H1 (cell line): ENCODE measurements at regions of chr10 and their contacts with region 1.

Region 1: DNA sequence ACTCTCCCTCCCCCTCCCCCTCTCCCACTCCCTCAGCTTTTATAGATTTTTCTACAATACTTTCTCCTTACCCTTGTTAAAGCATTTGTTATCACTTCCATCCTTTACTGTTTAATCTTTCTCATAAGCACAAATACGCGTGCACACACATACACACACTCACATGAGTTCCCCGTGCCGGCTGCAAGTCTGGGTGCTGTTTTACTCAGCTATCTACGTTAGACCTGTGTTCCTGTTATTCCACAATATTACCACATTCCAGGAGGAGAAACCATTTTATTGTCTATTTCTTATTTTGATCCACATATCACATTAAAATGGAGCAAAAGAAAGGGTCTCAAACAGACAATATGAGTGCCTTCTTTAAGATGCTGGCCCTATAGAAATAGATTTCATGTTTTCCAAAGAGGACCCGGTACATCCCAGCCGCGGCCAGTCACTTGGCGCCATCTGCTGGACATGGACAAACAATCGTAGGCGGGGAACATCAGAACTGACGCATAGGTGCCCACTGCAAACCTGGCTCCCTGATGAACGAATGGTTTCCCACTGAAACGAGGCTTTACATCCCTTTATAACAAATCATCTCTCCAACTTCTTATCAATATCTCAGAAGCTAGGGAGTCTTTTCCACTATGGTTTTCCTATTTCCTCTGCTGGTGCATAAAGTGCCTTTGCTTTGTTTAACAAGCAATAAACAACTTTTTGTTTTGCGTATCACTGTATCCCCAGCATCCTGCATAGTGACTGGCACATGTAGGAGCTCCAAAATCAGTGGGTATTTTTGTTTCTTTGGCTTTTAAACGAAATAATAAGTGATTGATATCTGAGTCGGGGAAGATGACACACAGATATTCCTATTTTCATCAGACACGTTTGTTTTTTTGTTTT is 25.2 kb upstream of the OPTN start:
- DNase-seq: peak; percentile 25 to 83
- H3K4me3 ChIP-seq: no peak overlapping the region
- H3K27ac ChIP-seq: no peak overlapping the region
- H3K4me1 ChIP-seq: peaks cover 0 to under 1% (median under 1%) of the 10 kb centered on the region in 4 experiments; a peak in 2 of 7 replicates
- H3K27me3 ChIP-seq: no peaks in the 10 kb centered on the region
- CTCF ChIP-seq: peak; percentile 88 to 89 (median 89)
- EP300 ChIP-seq: no peak
- POLR2A ChIP-seq: no peak
- RAD21 ChIP-seq: peak; percentile 97

Region 2: DNA sequence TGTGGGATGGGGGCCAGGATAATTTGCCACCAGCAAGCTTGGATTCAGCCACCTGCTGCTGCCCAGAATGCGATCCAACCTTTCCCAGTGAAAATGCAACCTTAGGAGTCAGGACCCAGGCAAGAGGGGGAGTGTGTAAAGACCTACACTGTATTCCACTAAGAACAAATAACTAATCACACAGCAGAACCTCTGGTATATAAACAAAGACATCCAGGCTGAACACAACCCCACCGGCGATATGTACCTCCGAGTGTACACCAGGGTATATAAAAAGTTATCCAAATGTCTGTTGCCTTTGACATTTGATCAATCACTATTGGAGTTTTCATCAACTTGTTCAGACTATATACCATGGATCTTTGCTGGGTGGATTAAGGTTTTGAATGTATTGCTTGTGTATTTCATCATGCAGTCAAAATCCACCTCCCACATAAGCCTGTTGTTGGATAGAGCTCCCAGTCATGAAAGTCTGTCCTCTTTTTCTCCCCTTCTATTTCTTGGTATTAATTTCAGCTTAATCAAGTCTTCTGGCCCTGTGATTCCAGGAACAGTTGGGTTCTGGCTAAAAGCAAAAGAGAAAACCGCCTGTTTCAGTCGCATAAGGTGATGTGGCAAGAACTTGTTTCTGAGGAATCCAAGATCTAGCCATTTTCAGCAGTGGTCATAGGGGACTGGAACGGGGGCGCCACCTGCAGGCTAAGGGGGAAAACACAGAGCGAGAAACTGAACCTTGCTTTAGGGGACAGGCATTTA is 364.0 kb before region 1 on chr10:
- CTCF ChIA-PET with region 1: interaction called, 11 read pairs
- POLR2A ChIA-PET with region 1: no interaction called
- DNase-seq: peak; percentile 43 to 90
- H3K4me3 ChIP-seq: no peak overlapping the region
- H3K27ac ChIP-seq: no peak overlapping the region
- H3K4me1 ChIP-seq: peaks cover 2 to 18% (median 6%) of the 10 kb centered on the region in 4 experiments; a peak in 4 of 7 replicates
- H3K27me3 ChIP-seq: no peaks in the 10 kb centered on the region
- CTCF ChIP-seq: peak; percentile 84 to 94 (median 87)
- EP300 ChIP-seq: no peak
- POLR2A ChIP-seq: no peak
- RAD21 ChIP-seq: peak; percentile 94 to 95

Region 3: DNA sequence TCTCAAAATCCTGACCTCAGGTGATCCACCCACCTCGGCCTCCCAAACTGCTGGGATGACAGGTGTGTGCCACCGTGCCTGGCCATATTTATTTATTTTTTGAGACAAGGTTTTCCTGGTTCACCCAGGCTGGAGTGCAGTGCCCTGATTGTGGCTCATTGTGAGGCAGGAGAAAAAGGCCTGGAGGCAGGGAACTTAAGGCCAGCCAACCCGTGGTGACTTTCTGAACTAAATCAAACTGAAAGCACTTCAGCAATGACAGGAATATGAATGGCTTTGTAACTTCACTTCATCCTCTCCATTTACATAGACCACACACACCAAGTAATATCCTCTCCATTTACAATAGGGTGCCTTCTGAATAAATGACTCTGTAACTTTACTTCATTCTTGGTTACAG is 197.7 kb before region 1 on chr10:
- CTCF ChIA-PET with region 1: no interaction called
- POLR2A ChIA-PET with region 1: no interaction called
- DNase-seq: no peak
- H3K4me3 ChIP-seq: no peak overlapping the region
- H3K27ac ChIP-seq: no peak overlapping the region
- H3K4me1 ChIP-seq: no peaks in the 10 kb centered on the region; a peak in 1 of 7 replicates
- H3K27me3 ChIP-seq: no peaks in the 10 kb centered on the region
- CTCF ChIP-seq: no peak
- EP300 ChIP-seq: no peak
- POLR2A ChIP-seq: no peak
- RAD21 ChIP-seq: no peak

Region 4: GRCh38 chr10:13016426-13016825 is 58.4 kb before region 1 on chr10:
- CTCF ChIA-PET with region 1: no interaction called
- POLR2A ChIA-PET with region 1: no interaction called
- DNase-seq: no peak
- H3K4me3 ChIP-seq: no peak overlapping the region
- H3K27ac ChIP-seq: no peak overlapping the region
- H3K4me1 ChIP-seq: no peaks in the 10 kb centered on the region
- H3K27me3 ChIP-seq: no peaks in the 10 kb centered on the region
- CTCF ChIP-seq: no peak
- EP300 ChIP-seq: no peak
- POLR2A ChIP-seq: no peak
- RAD21 ChIP-seq: no peak

Region 5: GRCh38 chr10:13046851-13047528 is 27.8 kb before region 1 on chr10:
- CTCF ChIA-PET with region 1: interaction called, 11 read pairs
- POLR2A ChIA-PET with region 1: no interaction called
- DNase-seq: no peak
- H3K4me3 ChIP-seq: no peak overlapping the region
- H3K27ac ChIP-seq: no peak overlapping the region
- H3K4me1 ChIP-seq: no peaks in the 10 kb centered on the region; a peak in 2 of 7 replicates
- H3K27me3 ChIP-seq: no peaks in the 10 kb centered on the region
- CTCF ChIP-seq: no peak
- EP300 ChIP-seq: no peak
- POLR2A ChIP-seq: no peak
- RAD21 ChIP-seq: no peak

Region 6: GRCh38 chr10:13056456-13057077 is 18.2 kb before region 1 on chr10:
- CTCF ChIA-PET with region 1: interaction called, 13 read pairs
- POLR2A ChIA-PET with region 1: interaction called, 4 read pairs
- DNase-seq: no peak
- H3K4me3 ChIP-seq: no peak overlapping the region
- H3K27ac ChIP-seq: no peak overlapping the region
- H3K4me1 ChIP-seq: peaks cover 0 to 1% (median 0%) of the 10 kb centered on the region in 4 experiments; a peak in 3 of 7 replicates
- H3K27me3 ChIP-seq: no peaks in the 10 kb centered on the region; a peak in 2 of 7 replicates
- CTCF ChIP-seq: peak; percentile 19 to 60 (median 54)
- EP300 ChIP-seq: no peak
- POLR2A ChIP-seq: no peak
- RAD21 ChIP-seq: peak; percentile 69 to 77

Region 7: GRCh38 chr10:13115832-13116803 is 41.3 kb after region 1 on chr10:
- CTCF ChIA-PET with region 1: no interaction called
- POLR2A ChIA-PET with region 1: no interaction called
- DNase-seq: no peak
- H3K4me3 ChIP-seq: no peak overlapping the region
- H3K27ac ChIP-seq: no peak overlapping the region
- H3K4me1 ChIP-seq: no peaks in the 10 kb centered on the region
- H3K27me3 ChIP-seq: no peaks in the 10 kb centered on the region
- CTCF ChIP-seq: no peak
- EP300 ChIP-seq: no peak
- POLR2A ChIP-seq: no peak
- RAD21 ChIP-seq: no peak

Region 8: GRCh38 chr10:13184730-13185514 is 110.1 kb after region 1 on chr10:
- CTCF ChIA-PET with region 1: no interaction called
- POLR2A ChIA-PET with region 1: no interaction called
- DNase-seq: no peak
- H3K4me3 ChIP-seq: no peak overlapping the region
- H3K27ac ChIP-seq: no peak overlapping the region
- H3K4me1 ChIP-seq: no peaks in the 10 kb centered on the region
- H3K27me3 ChIP-seq: no peaks in the 10 kb centered on the region
- CTCF ChIP-seq: no peak
- EP300 ChIP-seq: no peak
- POLR2A ChIP-seq: no peak
- RAD21 ChIP-seq: no peak